ENCODE measurements at regions of chr20 and their contacts with region 1.

Region 1: DNA sequence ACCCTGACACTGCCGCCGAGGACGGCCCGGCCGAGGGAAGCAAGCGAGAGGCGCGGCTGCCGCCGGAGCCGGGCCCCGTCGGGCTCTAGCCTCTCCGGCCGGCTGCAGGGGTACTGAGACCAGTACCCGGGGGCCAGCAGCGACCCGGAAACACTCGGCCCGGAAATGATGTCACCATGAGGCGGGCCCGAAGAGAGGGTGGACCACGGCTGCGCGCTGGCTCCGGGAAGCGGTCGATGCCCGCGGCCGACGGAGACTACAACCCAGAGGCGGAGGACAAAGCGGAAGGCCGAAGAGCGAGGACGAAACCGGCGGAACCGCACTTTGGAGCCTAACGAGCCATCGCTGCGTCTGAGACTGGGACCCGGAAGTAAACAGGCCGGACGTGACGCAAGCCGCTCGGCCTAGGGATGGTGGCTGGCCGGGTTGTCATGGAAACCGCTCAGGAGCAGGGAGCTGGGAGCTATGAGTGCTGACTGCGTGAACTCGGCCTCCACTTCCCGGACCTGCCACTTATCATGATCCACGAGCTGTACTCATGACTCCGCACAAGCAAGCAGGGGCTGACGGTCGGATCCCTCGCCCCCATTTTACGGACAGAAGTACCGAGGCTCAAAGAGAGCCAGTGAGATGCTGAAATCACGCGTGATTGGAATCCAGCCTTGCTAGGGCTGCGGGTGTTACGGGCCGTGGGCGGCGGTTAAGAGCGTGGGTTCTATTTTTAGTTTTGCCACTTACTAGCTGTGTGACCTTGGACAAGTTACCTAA is at the start of gene SPATA2:
- DNase-seq: peak; percentile 96
- ATAC-seq: peak; percentile 88
- H3K4me3 ChIP-seq: peak within 1 kb of the TSS; percentile 81
- H3K27ac ChIP-seq: peak within 1 kb of the TSS; percentile 96
- H3K4me1 ChIP-seq: peaks cover 23% of the 10 kb centered on the region
- H3K27me3 ChIP-seq: no peaks in the 10 kb centered on the region
- CTCF ChIP-seq: no peak
- total RNA-seq, gene SPATA2: 7.4 and 8.1 TPM in 2 replicates

Region 2: GRCh38 chr20:49899541-49900383 is 15.8 kb before region 1 on chr20:
- CTCF ChIA-PET with region 1: no interaction called
- POLR2A ChIA-PET with region 1: interaction called, 25 read pairs
- intact Hi-C with region 1: no loop called
- DNase-seq: no peak
- ATAC-seq: no peak
- H3K4me3 ChIP-seq: no peak overlapping the region
- H3K27ac ChIP-seq: no peak overlapping the region
- H3K4me1 ChIP-seq: no peaks in the 10 kb centered on the region
- H3K27me3 ChIP-seq: no peaks in the 10 kb centered on the region
- CTCF ChIP-seq: no peak

Region 3: GRCh38 chr20:49928401-49929141 is 13.0 kb after region 1 on chr20:
- CTCF ChIA-PET with region 1: interaction called, 5 read pairs
- POLR2A ChIA-PET with region 1: interaction called, 3 read pairs
- intact Hi-C with region 1: loop called (anchors 1 kb)
- DNase-seq: peak; percentile 97
- ATAC-seq: peak; percentile 98
- H3K4me3 ChIP-seq: peak overlapping the region; percentile 26; the same call in 1 of the 2 replicates
- H3K27ac ChIP-seq: no peak overlapping the region
- H3K4me1 ChIP-seq: 0 out of 2 replicates have a peak, but pooled peaks cover 3% of the 10 kb centered on the region
- H3K27me3 ChIP-seq: no peaks in the 10 kb centered on the region
- CTCF ChIP-seq: peak; percentile 98

Measured in PC-3 (cell line).